ENCODE measurements at regions of chr19 and their contacts with region 1.

Region 1: GRCh38 chr19:53509443-53509842 is 28.5 kb upstream of the ZNF331 start:
- DNase-seq: no peak
- H3K4me3 ChIP-seq: no peak overlapping the region
- H3K27ac ChIP-seq: no peak overlapping the region
- H3K27me3 ChIP-seq: no peaks in the 10 kb centered on the region
- CTCF ChIP-seq: no peak

Region 2: GRCh38 chr19:53195265-53195903 is 314.1 kb before region 1 on chr19:
- CTCF ChIA-PET with region 1: interaction called, 10 read pairs
- POLR2A ChIA-PET with region 1: no interaction called
- DNase-seq: peak; percentile 43
- H3K4me3 ChIP-seq: no peak overlapping the region
- H3K27ac ChIP-seq: no peak overlapping the region
- H3K27me3 ChIP-seq: no peaks in the 10 kb centered on the region
- CTCF ChIP-seq: peak; percentile 87

Region 3: GRCh38 chr19:53537480-53538383 is 28.3 kb after region 1 on chr19 and contains the start of gene ZNF331:
- CTCF ChIA-PET with region 1: no interaction called
- POLR2A ChIA-PET with region 1: no interaction called
- DNase-seq: no peak
- H3K4me3 ChIP-seq: peak within 1 kb of the TSS; percentile 86
- H3K27ac ChIP-seq: peak within 1 kb of the TSS; percentile 57
- H3K27me3 ChIP-seq: no peaks in the 10 kb centered on the region
- CTCF ChIP-seq: peak; percentile 51
- polyA plus RNA-seq, gene ZNF331: 4.2 and 4.4 TPM in 2 replicates

Measured in AG04450 (cell line).